ENCODE measurements at regions of chr9 and their contacts with region 1.

Region 1: GRCh38 chr9:111548623-111549022 is 23.6 kb downstream of the ZNF483 start:
- DNase-seq: no peak
- H3K4me3 ChIP-seq: no peak overlapping the region
- H3K27ac ChIP-seq: no peak overlapping the region
- H3K4me1 ChIP-seq: no peaks in the 10 kb centered on the region
- H3K27me3 ChIP-seq: no peaks in the 10 kb centered on the region
- CTCF ChIP-seq: no peak
- EP300 ChIP-seq: no peak
- POLR2A ChIP-seq: no peak
- RAD21 ChIP-seq: no peak

Region 2: DNA sequence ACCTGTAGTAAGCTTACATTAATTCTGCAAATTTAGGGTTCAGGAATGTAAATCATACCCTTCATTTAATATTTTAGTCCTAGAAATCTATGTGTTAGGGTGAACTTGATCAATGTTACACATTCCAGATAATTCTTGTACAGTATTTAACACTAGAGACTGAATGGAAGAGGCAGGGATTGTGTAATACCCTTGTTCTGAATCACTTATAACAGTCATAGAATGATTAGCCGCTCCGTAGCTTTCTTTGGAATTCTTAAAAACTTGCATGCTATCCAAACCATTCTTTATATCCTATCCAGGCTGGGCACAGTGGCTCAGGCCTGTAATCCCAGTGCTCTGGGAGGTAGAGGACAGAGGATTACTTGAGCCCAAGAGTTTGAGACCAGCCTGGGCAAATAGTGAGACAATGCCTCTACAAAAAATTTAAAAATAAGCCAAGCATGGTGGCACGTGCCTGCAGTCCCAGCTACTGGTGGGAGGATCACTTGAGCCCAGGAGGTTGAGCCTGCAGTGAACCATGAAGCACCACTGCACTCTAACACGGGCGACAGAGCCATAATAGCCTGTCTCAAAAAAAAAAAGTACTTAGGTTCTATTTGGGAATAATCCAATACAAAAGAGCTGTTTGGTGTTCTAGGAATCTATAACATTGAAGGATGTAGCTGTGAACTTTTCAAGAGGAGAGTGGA is 15.4 kb before region 1 on chr9:
- CTCF ChIA-PET with region 1: interaction called, 3 read pairs
- POLR2A ChIA-PET with region 1: interaction called, 53 read pairs
- DNase-seq: no peak
- H3K4me3 ChIP-seq: no peak overlapping the region
- H3K27ac ChIP-seq: no peak overlapping the region
- H3K4me1 ChIP-seq: peaks cover 3 to 7% (median 5%) of the 10 kb centered on the region in 4 experiments; a peak in 5 of 7 replicates
- H3K27me3 ChIP-seq: no peaks in the 10 kb centered on the region
- CTCF ChIP-seq: no peak
- EP300 ChIP-seq: no peak
- POLR2A ChIP-seq: no peak
- RAD21 ChIP-seq: no peak

Region 3: GRCh38 chr9:111601237-111602018 is 52.8 kb after region 1 on chr9:
- CTCF ChIA-PET with region 1: no interaction called
- POLR2A ChIA-PET with region 1: no interaction called
- DNase-seq: no peak
- H3K4me3 ChIP-seq: no peak overlapping the region
- H3K27ac ChIP-seq: no peak overlapping the region
- H3K4me1 ChIP-seq: no peaks in the 10 kb centered on the region
- H3K27me3 ChIP-seq: peaks cover 0 to 7% (median 5%) of the 10 kb centered on the region in 4 experiments; a peak in 2 of 7 replicates
- CTCF ChIP-seq: no peak
- EP300 ChIP-seq: no peak
- POLR2A ChIP-seq: no peak
- RAD21 ChIP-seq: no peak

Region 4: DNA sequence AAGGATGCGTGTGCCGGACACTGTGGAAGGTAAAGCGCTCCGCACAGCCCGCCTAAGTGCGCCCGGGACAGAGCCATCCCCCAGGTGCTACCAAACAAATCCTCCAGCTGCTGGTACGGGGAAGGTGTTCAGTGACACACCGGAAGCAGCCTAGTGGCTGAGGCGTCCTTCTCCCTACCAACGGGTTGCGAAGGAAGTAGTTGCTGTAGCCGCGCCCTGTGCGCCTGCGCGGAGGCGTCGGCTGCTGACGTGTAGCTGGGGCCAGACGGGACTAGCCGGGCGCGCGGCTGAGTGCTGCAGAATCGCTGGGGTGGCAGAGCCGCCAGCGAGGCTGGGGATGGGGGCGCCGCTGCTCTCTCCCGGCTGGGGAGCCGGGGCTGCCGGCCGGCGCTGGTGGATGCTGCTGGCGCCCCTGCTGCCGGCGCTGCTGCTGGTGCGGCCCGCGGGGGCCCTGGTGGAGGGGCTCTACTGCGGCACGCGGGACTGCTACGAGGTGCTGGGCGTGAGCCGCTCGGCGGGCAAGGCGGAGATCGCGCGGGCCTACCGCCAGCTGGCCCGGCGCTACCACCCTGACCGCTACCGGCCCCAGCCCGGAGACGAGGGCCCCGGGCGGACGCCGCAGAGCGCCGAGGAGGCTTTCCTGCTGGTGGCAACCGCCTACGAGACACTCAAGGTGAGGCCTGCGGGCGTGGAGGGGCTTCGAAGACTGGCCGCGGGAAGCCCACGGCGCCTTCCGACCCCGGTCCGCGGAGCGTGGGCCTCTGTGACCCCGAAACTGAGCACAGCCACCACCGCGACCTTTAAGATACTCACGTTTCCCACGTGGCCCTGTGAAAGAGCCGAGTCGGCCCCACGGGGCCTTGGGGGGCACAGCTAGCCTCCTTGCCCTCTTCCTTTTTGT is 82.7 kb after region 1 on chr9 and contains the start of gene DNAJC25:
- CTCF ChIA-PET with region 1: no interaction called
- POLR2A ChIA-PET with region 1: no interaction called
- DNase-seq: peak; percentile 96 to 99
- H3K4me3 ChIP-seq: peak within 1 kb of the TSS; percentile 81 to 92 (median 90)
- H3K27ac ChIP-seq: peak within 1 kb of the TSS; percentile 49; the same call in 1 of the 2 replicates
- H3K4me1 ChIP-seq: peaks cover 0 to 3% (median 0%) of the 10 kb centered on the region in 4 experiments; a peak in 3 of 7 replicates
- H3K27me3 ChIP-seq: no peaks in the 10 kb centered on the region
- CTCF ChIP-seq: 0 out of 4 replicates have a peak, but pooled peaks of 1 of the 3 experiments have one; percentile 1
- EP300 ChIP-seq: no peak
- POLR2A ChIP-seq: peak; percentile 100
- RAD21 ChIP-seq: no peak
- total RNA-seq, gene DNAJC25: 6.2 and 6.6 TPM in 2 replicates